AG04450 (cell line): ENCODE measurements at regions of chr4 and their contacts with region 1.

Region 1: DNA sequence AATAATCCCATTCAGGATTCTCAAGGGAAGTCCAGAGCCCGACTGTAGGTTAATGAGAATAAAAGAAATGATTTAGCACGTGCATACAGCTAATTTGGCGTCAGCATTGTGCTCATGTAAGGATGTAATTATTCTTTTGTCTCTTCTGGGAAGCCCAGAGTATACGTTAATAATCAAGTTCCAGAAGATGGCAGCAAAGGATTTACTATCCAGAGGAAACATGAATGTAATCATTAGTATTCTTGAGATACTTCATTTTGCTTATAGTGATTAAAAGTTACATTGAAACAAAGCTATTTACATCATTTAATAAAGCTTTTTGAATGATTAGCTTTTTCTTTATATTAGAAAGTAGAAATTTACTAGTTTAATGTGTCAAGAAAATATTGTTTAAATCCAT is 27.1 kb upstream of the MAP9 start:
- DNase-seq: no peak
- H3K4me3 ChIP-seq: no peak overlapping the region
- H3K27ac ChIP-seq: no peak overlapping the region
- H3K27me3 ChIP-seq: no peaks in the 10 kb centered on the region
- CTCF ChIP-seq: peak; percentile 49

Region 2: DNA sequence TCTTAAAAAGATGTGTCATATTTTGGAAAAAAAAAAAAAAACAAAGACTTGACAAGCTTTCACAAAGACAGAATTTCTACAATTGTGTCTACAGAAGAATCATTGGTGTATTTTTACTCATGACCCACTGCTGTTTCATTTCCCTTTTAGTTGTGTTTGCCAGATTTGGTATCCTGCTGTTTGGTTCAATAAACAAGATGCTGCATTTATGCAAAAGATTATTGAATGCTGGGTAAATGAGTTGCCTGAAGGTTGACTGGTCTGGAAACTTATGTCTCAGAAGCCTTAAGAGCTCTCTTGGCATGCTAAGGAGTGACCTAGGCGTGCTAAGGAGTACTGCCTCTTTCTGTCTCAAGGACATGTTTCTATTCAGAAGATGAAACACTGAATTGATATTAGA is 260.4 kb before region 1 on chr4:
- CTCF ChIA-PET with region 1: no interaction called
- POLR2A ChIA-PET with region 1: no interaction called
- DNase-seq: no peak
- H3K4me3 ChIP-seq: no peak overlapping the region
- H3K27ac ChIP-seq: no peak overlapping the region
- H3K27me3 ChIP-seq: no peaks in the 10 kb centered on the region
- CTCF ChIP-seq: no peak

Region 3: DNA sequence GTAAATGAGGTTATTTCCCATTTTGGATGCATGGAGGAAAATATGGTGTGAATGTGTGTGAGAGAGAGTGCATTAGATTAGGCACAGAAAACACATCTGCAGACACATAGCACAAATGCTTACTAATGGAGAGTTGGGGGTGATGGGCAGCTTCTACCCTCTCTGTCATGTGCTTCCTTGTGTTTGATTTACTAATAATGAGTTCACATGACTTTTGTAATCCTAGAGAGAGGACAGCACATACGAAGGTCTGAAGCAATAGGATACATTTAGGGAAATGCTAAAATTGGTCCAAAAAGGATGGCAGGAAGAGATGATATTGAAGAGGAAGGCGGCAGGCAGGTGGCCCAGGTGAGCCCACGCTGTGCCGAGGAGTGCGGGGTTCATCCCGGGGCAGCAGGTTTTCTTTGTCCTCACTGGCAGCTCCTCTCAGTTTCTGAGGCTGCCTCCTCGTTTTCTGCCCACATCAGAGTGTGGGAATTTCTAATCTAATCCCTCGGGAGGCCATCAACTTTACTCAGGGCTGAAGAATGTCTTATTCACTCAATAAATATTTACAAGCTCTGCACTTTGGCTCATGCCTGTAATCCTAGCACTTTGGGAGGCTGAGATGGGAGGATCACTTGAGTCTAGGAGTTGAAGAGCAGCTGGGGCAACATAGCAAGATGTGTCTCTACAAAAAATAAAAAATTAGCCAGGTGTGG is 11.3 kb before region 1 on chr4:
- CTCF ChIA-PET with region 1: interaction called, 10 read pairs
- POLR2A ChIA-PET with region 1: no interaction called
- DNase-seq: peak; percentile 38
- H3K4me3 ChIP-seq: no peak overlapping the region
- H3K27ac ChIP-seq: peak overlapping the region; percentile 96
- H3K27me3 ChIP-seq: peaks cover 2% of the 10 kb centered on the region
- CTCF ChIP-seq: no peak

Region 4: DNA sequence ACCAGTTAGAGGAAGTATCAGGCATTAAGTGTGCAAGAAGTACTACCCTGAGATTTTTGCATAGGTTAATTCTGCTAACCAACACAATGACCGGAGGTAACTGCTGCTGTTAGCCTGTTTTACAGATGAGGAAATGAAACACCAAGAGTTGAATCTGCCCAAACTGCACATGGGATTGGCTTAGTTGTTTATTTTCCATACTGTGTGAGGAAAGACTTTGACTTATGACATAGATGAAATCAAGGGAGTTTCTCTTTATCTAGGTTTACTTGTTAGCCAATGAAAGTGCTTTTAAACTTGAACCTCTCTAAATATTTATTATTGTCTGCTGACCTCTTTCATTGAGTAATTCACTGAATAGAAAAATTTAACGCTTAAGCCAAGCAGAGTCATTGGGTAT is 365.2 kb after region 1 on chr4:
- CTCF ChIA-PET with region 1: interaction called, 10 read pairs
- POLR2A ChIA-PET with region 1: no interaction called
- DNase-seq: peak; percentile 29
- H3K4me3 ChIP-seq: no peak overlapping the region
- H3K27ac ChIP-seq: no peak overlapping the region
- H3K27me3 ChIP-seq: no peaks in the 10 kb centered on the region
- CTCF ChIP-seq: no peak

Region 5: DNA sequence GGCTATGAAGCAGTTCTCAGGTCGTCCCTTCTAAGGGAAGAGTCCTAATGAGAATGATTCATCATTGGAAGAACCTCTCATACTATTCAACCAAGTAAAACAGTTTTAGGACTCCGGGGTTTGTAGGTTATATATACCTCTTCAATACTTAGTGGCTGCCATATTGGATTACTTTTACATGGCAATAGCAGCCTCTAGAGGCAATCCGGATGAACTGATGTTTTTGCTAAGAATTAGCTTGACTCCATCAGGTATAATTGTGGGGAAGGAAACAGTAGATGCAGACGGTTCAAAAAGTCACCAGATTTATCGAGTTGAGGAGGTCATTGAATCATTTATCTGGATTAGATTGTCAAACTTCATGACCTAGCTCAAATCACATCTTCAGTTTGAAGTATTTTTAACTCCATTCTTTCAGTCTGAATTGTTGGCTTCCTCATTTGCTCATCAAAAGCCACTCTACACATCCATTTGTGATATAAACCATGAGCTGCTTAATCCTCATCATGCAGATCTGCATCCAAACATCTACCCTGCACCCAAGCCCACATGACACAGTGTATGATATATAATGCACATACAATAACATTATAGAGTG is 383.3 kb after region 1 on chr4:
- CTCF ChIA-PET with region 1: interaction called, 56 read pairs
- POLR2A ChIA-PET with region 1: no interaction called
- DNase-seq: no peak
- H3K4me3 ChIP-seq: no peak overlapping the region
- H3K27ac ChIP-seq: no peak overlapping the region
- H3K27me3 ChIP-seq: no peaks in the 10 kb centered on the region
- CTCF ChIP-seq: peak; percentile 91

Region 6: GRCh38 chr4:155809835-155810234 is 405.9 kb after region 1 on chr4:
- CTCF ChIA-PET with region 1: interaction called, 15 read pairs
- POLR2A ChIA-PET with region 1: no interaction called
- DNase-seq: peak; percentile 70
- H3K4me3 ChIP-seq: no peak overlapping the region
- H3K27ac ChIP-seq: no peak overlapping the region
- H3K27me3 ChIP-seq: no peaks in the 10 kb centered on the region
- CTCF ChIP-seq: peak; percentile 74